ENCODE measurements at regions of chr13 and their contacts with region 1.

Region 1: GRCh38 chr13:27449936-27450828 is at the start of gene MTIF3:
- DNase-seq: peak; percentile 98
- H3K4me3 ChIP-seq: peak within 1 kb of the TSS; percentile 71
- H3K4me3 Mint-ChIP-seq: peak within 1 kb of the TSS; percentile 73
- H3K27ac Mint-ChIP-seq: peak within 1 kb of the TSS; percentile 55
- H3K4me1 ChIP-seq: peaks cover 12% of the 10 kb centered on the region; the same call in 1 of the 2 replicates
- H3K4me1 Mint-ChIP-seq: peaks cover 14% of the 10 kb centered on the region
- H3K27me3 ChIP-seq: no peaks in the 10 kb centered on the region
- H3K27me3 Mint-ChIP-seq: no peaks in the 10 kb centered on the region
- CTCF ChIP-seq: peak in 1 of 2 experiments; percentile 26
- total RNA-seq, gene MTIF3: 41.8 and 51.5 TPM in 2 replicates

Region 2: GRCh38 chr13:27242706-27243105 is 207.5 kb before region 1 on chr13:
- CTCF ChIA-PET with region 1: no interaction called
- POLR2A ChIA-PET with region 1: no interaction called
- intact Hi-C with region 1: no loop called
- DNase-seq: no peak
- H3K4me3 ChIP-seq: no peak overlapping the region
- H3K4me3 Mint-ChIP-seq: no peak overlapping the region
- H3K27ac Mint-ChIP-seq: no peak overlapping the region
- H3K4me1 ChIP-seq: no peaks in the 10 kb centered on the region
- H3K4me1 Mint-ChIP-seq: peaks cover 7% of the 10 kb centered on the region
- H3K27me3 ChIP-seq: no peaks in the 10 kb centered on the region
- H3K27me3 Mint-ChIP-seq: no peaks in the 10 kb centered on the region
- CTCF ChIP-seq: no peak

Region 3: GRCh38 chr13:27379694-27380641 is 70.2 kb before region 1 on chr13:
- CTCF ChIA-PET with region 1: no interaction called
- POLR2A ChIA-PET with region 1: no interaction called
- intact Hi-C with region 1: loop called (anchors 1 kb)
- DNase-seq: peak; percentile 85 to 90
- H3K4me3 ChIP-seq: no peak overlapping the region
- H3K4me3 Mint-ChIP-seq: no peak overlapping the region
- H3K27ac Mint-ChIP-seq: no peak overlapping the region
- H3K4me1 ChIP-seq: peaks cover 4% of the 10 kb centered on the region; the same call in 1 of the 2 replicates
- H3K4me1 Mint-ChIP-seq: peaks cover 11% of the 10 kb centered on the region
- H3K27me3 ChIP-seq: no peaks in the 10 kb centered on the region
- H3K27me3 Mint-ChIP-seq: no peaks in the 10 kb centered on the region
- CTCF ChIP-seq: peak; percentile 88 to 90

Region 4: DNA sequence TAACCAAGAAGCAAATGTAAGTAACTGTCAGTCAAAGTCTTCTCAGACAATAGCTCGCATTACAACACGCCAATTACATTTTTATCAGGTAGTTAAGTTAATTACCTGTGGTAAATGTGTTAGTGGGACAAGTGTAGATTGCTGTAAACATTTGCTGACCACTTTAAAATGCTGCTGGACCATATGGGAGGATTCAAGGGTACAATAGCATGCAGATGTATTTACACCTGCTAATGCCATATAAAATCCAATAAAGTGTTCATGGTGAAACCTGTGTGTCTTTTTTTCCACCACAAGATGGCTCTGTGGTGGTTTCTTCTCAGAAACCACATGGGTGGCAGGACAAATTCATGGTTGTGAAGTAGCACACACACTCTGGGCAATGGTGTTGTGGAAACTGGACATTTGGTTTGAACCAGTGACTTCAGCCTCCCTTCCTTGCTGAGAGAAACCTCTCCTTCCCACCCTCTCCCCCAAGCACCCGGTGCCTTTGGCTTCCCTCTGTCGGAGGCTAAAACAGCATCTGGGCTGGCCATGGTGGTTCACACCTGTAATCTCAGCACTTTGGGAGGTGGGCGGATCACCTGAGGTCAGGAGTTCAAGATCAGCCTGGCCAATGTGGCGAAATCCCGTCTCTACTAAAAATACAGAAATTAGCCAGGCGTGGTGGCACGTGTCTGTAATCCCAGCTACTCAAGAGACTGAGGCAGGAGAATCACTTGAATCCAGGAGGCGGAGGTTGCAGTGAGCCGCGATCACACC is 43.8 kb before region 1 on chr13:
- CTCF ChIA-PET with region 1: interaction called, 6 read pairs
- POLR2A ChIA-PET with region 1: interaction called, 4 read pairs
- intact Hi-C with region 1: loop called (anchors 2 kb)
- DNase-seq: peak in 1 of 2 experiments; percentile 57
- H3K4me3 ChIP-seq: no peak overlapping the region
- H3K4me3 Mint-ChIP-seq: no peak overlapping the region
- H3K27ac Mint-ChIP-seq: no peak overlapping the region
- H3K4me1 ChIP-seq: peaks cover 43% of the 10 kb centered on the region
- H3K4me1 Mint-ChIP-seq: peaks cover 32% of the 10 kb centered on the region
- H3K27me3 ChIP-seq: no peaks in the 10 kb centered on the region
- H3K27me3 Mint-ChIP-seq: no peaks in the 10 kb centered on the region
- CTCF ChIP-seq: peak; percentile 62 to 65

Region 5: DNA sequence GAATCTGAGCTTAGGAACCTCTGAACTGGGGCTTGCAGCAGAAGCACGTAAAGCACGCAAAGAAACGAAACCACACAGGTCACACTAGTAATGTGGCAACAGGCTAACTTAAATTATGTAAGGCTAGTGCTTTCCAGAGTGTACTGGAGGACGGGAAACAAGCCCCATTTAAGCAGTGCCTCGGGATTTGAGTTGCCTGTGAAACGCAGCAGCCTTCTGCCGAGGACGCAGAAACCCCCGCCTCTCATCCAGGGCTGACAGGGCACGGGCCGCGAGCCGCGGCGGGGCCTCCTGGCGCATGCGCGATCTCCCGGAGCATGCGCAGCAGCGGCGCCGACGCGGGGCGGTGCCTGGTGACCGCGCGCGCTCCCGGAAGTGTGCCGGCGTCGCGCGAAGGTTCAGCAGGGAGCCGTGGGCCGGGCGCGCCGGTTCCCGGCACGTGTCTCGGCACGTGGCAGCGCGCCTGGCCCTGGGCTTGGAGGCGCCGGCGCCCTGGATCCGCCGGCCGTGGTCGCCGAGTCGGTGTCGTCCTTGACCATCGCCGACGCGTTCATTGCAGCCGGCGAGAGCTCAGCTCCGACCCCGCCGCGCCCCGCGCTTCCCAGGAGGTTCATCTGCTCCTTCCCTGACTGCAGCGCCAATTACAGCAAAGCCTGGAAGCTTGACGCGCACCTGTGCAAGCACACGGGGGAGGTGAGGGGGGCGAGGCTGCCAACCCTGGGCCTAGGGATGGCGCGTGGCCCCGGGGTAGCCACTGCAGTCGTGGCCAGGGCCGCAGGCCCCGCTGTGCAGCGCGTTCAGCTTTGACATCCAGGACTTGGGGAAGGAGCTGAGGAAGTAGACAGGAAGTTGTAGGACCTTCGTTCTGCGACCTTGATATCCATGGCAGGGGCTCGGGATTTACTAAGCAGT is 25.7 kb before region 1 on chr13 and contains the start of gene GTF3A:
- CTCF ChIA-PET with region 1: interaction called, 6 read pairs
- POLR2A ChIA-PET with region 1: interaction called, 4 read pairs
- intact Hi-C with region 1: loop called (anchors 1 kb)
- DNase-seq: peak; percentile 81 to 93
- H3K4me3 ChIP-seq: peak within 1 kb of the TSS; percentile 87
- H3K4me3 Mint-ChIP-seq: peak within 1 kb of the TSS; percentile 87
- H3K27ac Mint-ChIP-seq: peak within 1 kb of the TSS; percentile 88
- H3K4me1 ChIP-seq: peaks cover 8% of the 10 kb centered on the region
- H3K4me1 Mint-ChIP-seq: peaks cover 16% of the 10 kb centered on the region
- H3K27me3 ChIP-seq: no peaks in the 10 kb centered on the region
- H3K27me3 Mint-ChIP-seq: no peaks in the 10 kb centered on the region
- CTCF ChIP-seq: no peak
- total RNA-seq, gene GTF3A: 132 and 141 TPM in 2 replicates

Region 6: GRCh38 chr13:27465611-27466010 is 15.4 kb after region 1 on chr13:
- CTCF ChIA-PET with region 1: interaction called, 10 read pairs
- POLR2A ChIA-PET with region 1: no interaction called
- intact Hi-C with region 1: no loop called
- DNase-seq: no peak
- H3K4me3 ChIP-seq: no peak overlapping the region
- H3K4me3 Mint-ChIP-seq: no peak overlapping the region
- H3K27ac Mint-ChIP-seq: no peak overlapping the region
- H3K4me1 ChIP-seq: peaks cover 7% of the 10 kb centered on the region; the same call in 1 of the 2 replicates
- H3K4me1 Mint-ChIP-seq: peaks cover 4% of the 10 kb centered on the region
- H3K27me3 ChIP-seq: no peaks in the 10 kb centered on the region
- H3K27me3 Mint-ChIP-seq: no peaks in the 10 kb centered on the region
- CTCF ChIP-seq: no peak

Region 7: GRCh38 chr13:27620377-27621115 is 170.4 kb after region 1 on chr13 and contains the start of gene LNX2:
- CTCF ChIA-PET with region 1: no interaction called
- POLR2A ChIA-PET with region 1: interaction called, 13 read pairs
- intact Hi-C with region 1: loop called (anchors 2 kb)
- DNase-seq: peak; percentile 98 to 99
- H3K4me3 ChIP-seq: peak within 1 kb of the TSS; percentile 76
- H3K4me3 Mint-ChIP-seq: peak within 1 kb of the TSS; percentile 99
- H3K27ac Mint-ChIP-seq: peak within 1 kb of the TSS; percentile 96
- H3K4me1 ChIP-seq: peaks cover 47% of the 10 kb centered on the region
- H3K4me1 Mint-ChIP-seq: peaks cover 39% of the 10 kb centered on the region
- H3K27me3 ChIP-seq: no peaks in the 10 kb centered on the region
- H3K27me3 Mint-ChIP-seq: no peaks in the 10 kb centered on the region
- CTCF ChIP-seq: no peak
- total RNA-seq, gene LNX2: 23.8 and 24.4 TPM in 2 replicates

Region 8: DNA sequence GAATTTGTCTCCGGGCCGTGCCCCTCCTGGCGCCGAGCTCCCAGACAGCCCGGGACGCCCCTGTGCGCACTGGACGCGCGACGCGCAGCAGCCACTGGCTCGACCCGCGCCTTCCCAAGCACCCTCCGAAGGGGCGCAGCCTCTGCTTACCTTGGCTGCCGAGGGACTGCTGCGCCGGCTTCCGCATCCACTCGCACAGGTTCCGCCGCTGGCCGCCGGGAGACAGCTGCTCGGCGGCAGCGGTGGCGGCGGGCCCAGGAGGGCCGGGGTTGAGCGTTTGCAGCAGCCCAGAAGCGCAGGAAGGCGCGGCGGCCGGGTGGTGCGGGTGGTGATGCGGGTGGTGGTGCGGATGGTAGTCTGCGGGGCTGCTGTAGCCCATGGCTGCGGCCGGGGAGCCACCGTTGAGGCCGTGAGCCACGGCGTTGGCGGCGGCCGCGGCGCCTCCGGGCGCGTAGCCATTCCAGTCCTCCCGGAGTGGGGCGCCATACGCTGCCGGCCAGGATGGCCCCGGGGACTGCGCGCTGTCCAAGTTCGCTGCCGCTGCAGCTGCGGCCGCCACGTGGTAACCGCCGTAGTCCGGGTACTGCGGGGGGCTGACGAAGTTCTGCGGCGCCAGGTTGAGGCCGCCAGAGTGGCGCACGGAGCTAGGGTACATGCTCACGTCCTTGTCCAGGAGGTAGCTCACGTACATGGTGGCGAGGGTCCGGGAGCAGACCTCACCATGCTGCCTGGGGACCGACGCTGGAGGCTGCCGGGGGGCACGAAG is 518.3 kb after region 1 on chr13:
- CTCF ChIA-PET with region 1: no interaction called
- POLR2A ChIA-PET with region 1: no interaction called
- intact Hi-C with region 1: loop called (anchors 5 kb)
- DNase-seq: peak in 1 of 2 experiments; percentile 71
- H3K4me3 ChIP-seq: peak overlapping the region; percentile 96
- H3K4me3 Mint-ChIP-seq: peak overlapping the region; percentile 99
- H3K27ac Mint-ChIP-seq: peak overlapping the region; percentile 65
- H3K4me1 ChIP-seq: peaks cover 47% of the 10 kb centered on the region
- H3K4me1 Mint-ChIP-seq: peaks cover 10% of the 10 kb centered on the region
- H3K27me3 ChIP-seq: no peaks in the 10 kb centered on the region
- H3K27me3 Mint-ChIP-seq: no peaks in the 10 kb centered on the region
- CTCF ChIP-seq: peak in 1 of 2 experiments; percentile 27

Measured in Caco-2 (cell line).